GM10248 (cell line): ENCODE measurements at regions of chr19 and their contacts with region 1.

Region 1: DNA sequence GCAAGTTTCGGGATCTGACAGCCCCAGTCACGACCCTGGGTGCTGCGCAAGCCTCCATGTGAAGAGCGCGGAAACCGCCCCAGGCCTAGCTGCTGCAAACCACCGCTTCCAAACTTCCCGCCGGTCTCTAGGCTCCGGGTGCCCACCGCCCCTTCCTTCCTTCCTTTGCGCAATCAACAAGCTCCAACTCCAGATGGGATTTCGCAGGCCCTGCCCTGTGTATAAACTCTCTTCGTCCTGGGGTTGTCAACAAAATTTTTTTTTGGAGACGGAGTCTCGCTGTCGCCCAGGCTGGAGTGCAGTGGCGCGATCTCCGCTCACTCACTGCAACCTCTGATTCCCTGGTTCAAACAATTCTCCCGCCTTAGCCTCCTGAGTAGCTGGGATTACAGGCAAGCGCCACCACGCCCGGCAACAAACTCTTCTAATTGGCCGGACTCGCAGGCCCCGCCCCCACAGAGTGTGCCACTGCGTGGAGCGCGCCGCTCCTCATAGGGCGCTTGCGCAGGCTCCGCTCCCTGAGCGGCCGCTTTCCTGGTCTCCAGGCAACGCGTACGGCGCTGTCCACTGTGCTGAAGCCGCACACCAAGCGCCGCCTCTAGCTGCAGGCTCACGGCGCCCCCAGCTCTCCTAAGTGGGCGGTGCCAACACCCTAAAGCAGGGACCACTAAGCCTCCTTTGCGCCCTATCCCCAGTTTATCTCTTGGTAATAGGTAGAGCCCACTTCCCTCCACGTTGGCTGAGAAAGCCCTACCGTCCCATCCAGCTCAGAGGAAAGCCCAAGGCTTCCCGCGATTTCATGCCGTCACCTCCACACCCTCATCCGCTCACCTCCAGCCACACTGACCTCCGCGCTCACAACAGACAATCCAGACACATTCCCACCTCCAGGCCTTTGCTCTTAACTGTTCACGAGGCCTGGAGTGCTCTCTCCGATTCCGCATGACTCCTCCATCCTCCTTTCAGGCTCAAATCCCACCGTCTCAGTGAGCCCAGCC is 5.5 kb upstream of the QTRT1 start:
- DNase-seq: peak; percentile 95
- CTCF ChIP-seq: no peak

Region 2: DNA sequence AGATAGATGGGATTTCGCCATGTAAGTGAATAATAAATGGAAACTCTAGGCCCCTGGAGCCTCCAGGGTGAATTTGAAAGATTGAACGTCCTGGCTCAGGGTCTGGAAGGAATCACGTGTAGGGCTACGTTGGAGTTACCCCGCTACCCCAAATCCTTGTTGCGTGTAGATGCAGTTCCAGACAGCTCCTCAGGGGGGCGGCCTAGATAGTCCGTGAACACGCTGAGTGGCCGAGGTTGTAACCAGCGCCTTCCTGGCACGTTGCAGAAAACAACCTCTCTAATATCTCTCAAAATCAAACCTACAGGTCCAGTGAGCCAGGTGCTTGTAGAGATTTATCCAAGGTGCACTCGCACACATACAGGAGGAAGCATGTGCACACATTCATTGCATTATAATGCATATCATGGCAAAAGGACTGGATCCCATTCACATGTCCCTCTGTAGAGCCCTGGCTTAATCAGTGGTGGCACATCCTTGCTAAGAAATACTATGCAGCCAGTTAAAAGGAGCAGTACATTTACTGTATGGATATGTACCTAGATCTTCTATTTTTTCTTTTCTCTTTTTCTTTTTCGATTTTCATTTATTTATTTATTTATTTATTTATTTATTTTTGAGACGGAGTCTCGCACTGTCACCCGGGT is 190.0 kb before region 1 on chr19:
- CTCF ChIA-PET with region 1: interaction called, 31 read pairs
- POLR2A ChIA-PET with region 1: no interaction called
- DNase-seq: peak; percentile 72
- CTCF ChIP-seq: peak; percentile 67

Region 3: GRCh38 chr19:10580979-10581631 is 114.6 kb before region 1 on chr19:
- CTCF ChIA-PET with region 1: interaction called, 161 read pairs
- POLR2A ChIA-PET with region 1: no interaction called
- DNase-seq: peak; percentile 82
- CTCF ChIP-seq: peak; percentile 99

Region 4: GRCh38 chr19:10644260-10645007 is 51.3 kb before region 1 on chr19:
- CTCF ChIA-PET with region 1: interaction called, 28 read pairs
- POLR2A ChIA-PET with region 1: interaction called, 10 read pairs
- DNase-seq: peak; percentile 89
- CTCF ChIP-seq: peak; percentile 95

Region 5: GRCh38 chr19:10677751-10678150 is 17.9 kb before region 1 on chr19:
- CTCF ChIA-PET with region 1: interaction called, 14 read pairs
- POLR2A ChIA-PET with region 1: no interaction called
- DNase-seq: no peak
- CTCF ChIP-seq: no peak

Region 6: DNA sequence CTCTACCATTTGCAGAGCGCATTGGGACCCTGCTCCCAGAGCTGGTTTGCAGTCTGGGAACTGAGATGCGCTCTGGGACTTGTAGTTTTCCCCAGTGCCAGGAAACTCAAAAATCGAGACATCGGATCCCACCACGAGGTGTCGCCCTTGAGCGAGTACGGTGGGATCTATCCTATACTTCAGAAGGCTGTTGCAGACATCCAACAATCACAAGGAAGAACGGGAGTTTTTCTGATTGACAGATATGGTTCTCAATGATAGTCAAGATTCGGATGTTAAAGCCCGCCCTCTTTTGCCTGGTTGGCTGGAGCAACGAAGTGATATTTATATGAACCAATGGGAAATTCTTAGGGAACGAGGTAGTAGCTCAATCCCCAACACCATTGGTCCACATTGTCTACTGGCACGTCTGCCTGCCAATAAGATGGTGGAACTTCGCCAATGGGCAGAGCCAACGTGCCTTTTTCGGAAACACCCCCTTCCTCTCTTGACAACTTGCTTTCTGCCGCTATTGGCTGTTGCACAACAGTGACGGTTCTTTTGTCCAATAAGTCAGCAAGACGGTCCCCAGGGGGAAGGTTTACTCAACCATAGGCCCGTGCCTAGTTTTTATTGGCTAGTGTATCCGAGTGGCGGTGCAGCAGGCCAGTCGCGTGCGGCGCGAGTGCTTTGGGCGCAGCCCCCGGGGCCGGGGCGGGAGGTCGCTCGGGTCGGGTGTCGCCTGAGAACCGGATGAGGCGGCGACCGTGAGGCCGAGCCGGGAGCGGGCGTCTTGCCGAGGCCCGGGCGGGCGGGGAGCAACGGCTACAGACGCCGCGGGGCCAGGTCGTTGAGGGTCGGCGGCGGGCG is 21.9 kb after region 1 on chr19 and contains the start of gene DNM2:
- CTCF ChIA-PET with region 1: interaction called, 68 read pairs
- POLR2A ChIA-PET with region 1: no interaction called
- DNase-seq: peak; percentile 97
- CTCF ChIP-seq: peak; percentile 73

Region 7: GRCh38 chr19:10737722-10738121 is 42.0 kb after region 1 on chr19:
- CTCF ChIA-PET with region 1: no interaction called
- POLR2A ChIA-PET with region 1: no interaction called
- DNase-seq: no peak
- CTCF ChIP-seq: no peak